Activated CD4-positive, alpha-beta T cell treated with anti-CD3 and anti-CD28 coated beads, Interleukin-2, amount 10 ng/mL, durations not matched to agents 7 days and 5 days (primary cell): ENCODE measurements at regions of chr20 and their contacts with region 1.

Region 1: DNA sequence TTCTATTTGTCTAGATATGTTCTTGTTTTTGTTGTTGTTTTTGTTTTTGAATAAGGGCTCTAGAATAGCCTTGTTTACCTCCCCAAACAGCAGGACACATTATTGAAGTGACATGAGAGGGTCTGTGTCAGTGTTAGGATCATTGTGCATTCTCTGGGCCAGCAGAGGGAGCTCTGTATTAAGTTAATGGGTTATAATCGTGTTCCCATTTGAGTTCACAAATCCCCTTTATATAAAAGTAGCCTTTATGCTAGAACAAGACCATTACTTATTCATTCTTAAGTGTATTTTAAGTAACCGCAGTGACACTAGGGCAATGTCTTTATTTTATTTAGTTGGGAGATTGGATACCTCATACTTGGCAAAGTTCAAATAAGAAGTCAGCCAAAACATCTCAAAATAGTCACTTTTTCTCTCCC is 44.8 kb downstream of the STK4 start:
- DNase-seq: peak; percentile 57
- H3K4me3 Mint-ChIP-seq: no peak overlapping the region
- H3K27ac Mint-ChIP-seq: no peak overlapping the region
- H3K4me1 Mint-ChIP-seq: peaks cover 35% of the 10 kb centered on the region
- H3K27me3 Mint-ChIP-seq: no peaks in the 10 kb centered on the region

Region 2: GRCh38 chr20:44966030-44966961 is 44.8 kb before region 1 on chr20 and contains the start of gene STK4:
- CTCF ChIA-PET with region 1: no interaction called
- POLR2A ChIA-PET with region 1: no interaction called
- DNase-seq: peak; percentile 95
- H3K4me3 Mint-ChIP-seq: peak within 1 kb of the TSS; percentile 94
- H3K27ac Mint-ChIP-seq: peak within 1 kb of the TSS; percentile 96
- H3K4me1 Mint-ChIP-seq: peaks cover 62% of the 10 kb centered on the region
- H3K27me3 Mint-ChIP-seq: no peaks in the 10 kb centered on the region
- total RNA-seq, gene STK4: 201 to 229 TPM

Region 3: GRCh38 chr20:44993343-44993742 is 17.8 kb before region 1 on chr20:
- CTCF ChIA-PET with region 1: interaction called, 10 read pairs
- POLR2A ChIA-PET with region 1: no interaction called
- DNase-seq: no peak
- H3K4me3 Mint-ChIP-seq: peak overlapping the region; percentile 23
- H3K27ac Mint-ChIP-seq: peak overlapping the region; percentile 76
- H3K4me1 Mint-ChIP-seq: peaks cover 59% of the 10 kb centered on the region
- H3K27me3 Mint-ChIP-seq: no peaks in the 10 kb centered on the region

Region 4: DNA sequence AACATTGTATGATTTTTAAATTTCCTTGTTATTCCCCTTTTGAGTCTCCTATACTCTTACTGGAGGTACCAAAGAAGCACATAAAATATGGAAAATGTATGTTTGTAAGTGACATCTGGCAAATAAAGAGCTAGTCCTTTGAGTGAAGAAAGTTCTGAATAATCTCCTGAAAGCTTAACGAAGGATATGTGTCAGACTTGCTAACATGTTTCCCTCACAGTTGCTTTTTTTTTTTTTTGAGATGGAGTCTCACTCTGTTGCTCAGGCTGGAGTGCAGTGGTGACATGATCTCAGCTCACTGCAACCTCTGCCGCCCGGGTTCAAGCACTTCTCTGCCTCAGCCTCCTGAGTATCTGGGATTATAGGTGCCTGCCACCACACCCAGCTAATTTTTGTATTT is 18.8 kb after region 1 on chr20:
- CTCF ChIA-PET with region 1: no interaction called
- POLR2A ChIA-PET with region 1: interaction called, 13 read pairs
- DNase-seq: no peak
- H3K4me3 Mint-ChIP-seq: no peak overlapping the region
- H3K27ac Mint-ChIP-seq: no peak overlapping the region
- H3K4me1 Mint-ChIP-seq: peaks cover 48% of the 10 kb centered on the region
- H3K27me3 Mint-ChIP-seq: no peaks in the 10 kb centered on the region

Region 5: GRCh38 chr20:45080867-45081624 is 69.9 kb after region 1 on chr20:
- CTCF ChIA-PET with region 1: no interaction called
- POLR2A ChIA-PET with region 1: no interaction called
- DNase-seq: peak; percentile 23
- H3K4me3 Mint-ChIP-seq: no peak overlapping the region
- H3K27ac Mint-ChIP-seq: peak overlapping the region; percentile 20
- H3K4me1 Mint-ChIP-seq: peaks cover 3% of the 10 kb centered on the region
- H3K27me3 Mint-ChIP-seq: no peaks in the 10 kb centered on the region

Region 6: DNA sequence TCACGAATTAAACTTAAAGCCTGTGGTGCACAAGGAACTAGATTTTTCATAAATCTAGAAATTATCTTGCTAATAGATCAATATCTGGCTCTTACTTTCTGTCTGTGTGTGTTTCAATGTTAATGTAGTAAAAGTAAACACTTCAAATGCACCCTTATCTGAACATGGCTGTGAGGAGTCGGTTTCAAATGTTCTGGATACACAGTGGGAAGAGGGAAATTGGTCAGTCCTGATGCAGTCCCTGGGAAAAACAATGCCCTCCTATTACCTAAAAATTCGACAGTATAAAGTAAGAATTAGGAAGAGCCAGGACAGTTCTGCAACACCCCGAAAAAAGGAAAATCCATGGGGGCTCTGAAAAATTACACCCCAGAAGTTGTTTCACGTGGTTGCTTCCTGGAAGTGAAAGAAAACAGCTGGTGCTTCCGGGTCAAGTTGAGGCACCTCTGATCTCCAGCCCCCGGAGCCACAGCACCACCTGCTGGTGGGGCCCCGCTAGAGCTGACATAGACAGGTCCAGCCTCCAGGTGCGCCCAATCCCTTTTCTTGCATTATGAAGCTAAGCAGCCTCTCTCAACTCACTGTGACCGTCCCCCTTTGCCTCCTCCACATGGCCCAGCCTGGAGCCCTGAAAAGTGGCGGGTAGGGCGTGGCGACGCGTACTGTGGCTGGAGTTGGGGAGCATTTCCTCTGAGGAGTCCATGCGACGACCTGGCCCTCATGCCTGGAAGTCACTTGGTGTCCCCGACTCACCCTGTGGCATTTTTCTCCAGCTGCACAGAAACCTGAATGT is 218.3 kb after region 1 on chr20:
- CTCF ChIA-PET with region 1: no interaction called
- POLR2A ChIA-PET with region 1: no interaction called
- DNase-seq: peak; percentile 50
- H3K4me3 Mint-ChIP-seq: no peak overlapping the region
- H3K27ac Mint-ChIP-seq: no peak overlapping the region
- H3K4me1 Mint-ChIP-seq: no peaks in the 10 kb centered on the region
- H3K27me3 Mint-ChIP-seq: peaks cover 33% of the 10 kb centered on the region